MCF 10A (cell line): ENCODE measurements at regions of chr6 and their contacts with region 1.

Region 1: DNA sequence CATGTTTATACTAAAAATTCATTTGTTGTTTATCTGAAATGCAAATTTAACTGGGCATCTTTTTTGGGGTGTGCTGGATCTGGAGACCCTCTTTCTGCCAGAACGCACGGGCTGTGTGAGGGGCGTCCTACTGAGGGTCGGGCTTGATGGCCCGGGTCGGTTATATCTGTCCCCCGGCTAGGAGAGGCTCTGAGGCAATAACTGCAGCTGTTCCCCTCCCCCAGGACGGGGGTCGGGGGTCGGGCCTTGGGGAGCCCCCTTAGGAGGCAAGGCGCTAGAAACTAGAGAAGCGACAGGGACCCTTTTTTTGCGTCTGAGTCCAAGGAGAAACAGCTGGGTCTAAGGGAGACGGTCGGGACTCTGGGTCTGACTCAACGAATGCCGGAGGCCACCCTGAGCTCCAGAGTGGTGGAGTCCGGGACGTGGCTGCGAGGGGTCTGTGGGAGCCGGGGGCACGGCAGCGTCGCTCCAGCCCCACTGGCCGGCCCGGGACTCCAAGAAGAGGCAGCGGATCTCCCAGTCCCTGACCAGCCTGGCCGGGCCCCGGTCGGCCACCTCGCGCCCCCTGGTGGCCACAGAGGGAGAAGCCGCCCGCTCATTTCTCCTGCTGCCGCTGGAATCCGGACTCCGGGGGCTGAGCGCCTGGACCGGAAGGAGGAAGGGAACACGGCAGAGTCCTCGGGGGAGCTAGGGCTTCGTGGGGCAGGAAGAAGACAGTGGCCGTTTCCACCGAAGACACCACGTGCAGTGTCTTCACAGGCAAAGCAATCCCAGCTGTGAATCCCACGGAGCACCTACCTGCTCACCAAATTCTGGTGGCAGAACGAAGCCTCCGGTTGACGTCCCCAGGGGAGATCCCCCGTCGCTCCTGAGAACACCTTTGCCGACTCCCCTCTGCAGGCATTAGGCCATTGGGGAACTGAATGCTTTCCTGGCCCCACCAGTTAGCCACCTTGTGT is 24.0 kb upstream of the SCML4 start:
- DNase-seq: peak; percentile 76
- H3K4me3 Mint-ChIP-seq: peak overlapping the region; percentile 69
- H3K27ac Mint-ChIP-seq: no peak overlapping the region
- H3K4me1 Mint-ChIP-seq: no peaks in the 10 kb centered on the region
- H3K27me3 Mint-ChIP-seq: no peaks in the 10 kb centered on the region
- CTCF ChIP-seq: peak; percentile 90

Region 2: DNA sequence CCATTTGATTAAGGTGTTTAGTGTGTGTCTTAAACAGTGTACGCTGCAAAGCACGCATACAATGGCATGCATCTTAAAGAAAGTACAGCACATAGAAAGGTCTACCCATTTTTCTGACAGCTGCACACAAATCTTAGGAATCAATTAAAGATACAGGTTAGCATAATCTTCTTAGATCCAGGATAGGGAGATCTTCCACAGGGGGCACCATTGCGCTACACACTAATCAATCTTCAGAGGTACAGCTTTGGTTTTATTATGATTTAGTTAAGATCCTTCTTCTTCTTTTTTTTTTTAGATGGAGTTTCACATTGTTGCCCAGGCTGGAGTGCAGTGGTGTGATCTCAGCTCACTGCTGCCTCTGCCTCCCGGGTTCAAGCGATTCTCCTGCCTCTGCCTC is 669.1 kb before region 1 on chr6:
- CTCF ChIA-PET with region 1: interaction called, 3 read pairs
- POLR2A ChIA-PET with region 1: no interaction called
- intact Hi-C with region 1: loop called (anchors 1 kb)
- DNase-seq: peak; percentile 53
- H3K4me3 Mint-ChIP-seq: no peak overlapping the region
- H3K27ac Mint-ChIP-seq: no peak overlapping the region
- H3K4me1 Mint-ChIP-seq: peaks cover 5% of the 10 kb centered on the region
- H3K27me3 Mint-ChIP-seq: no peaks in the 10 kb centered on the region
- CTCF ChIP-seq: peak; percentile 34

Region 3: DNA sequence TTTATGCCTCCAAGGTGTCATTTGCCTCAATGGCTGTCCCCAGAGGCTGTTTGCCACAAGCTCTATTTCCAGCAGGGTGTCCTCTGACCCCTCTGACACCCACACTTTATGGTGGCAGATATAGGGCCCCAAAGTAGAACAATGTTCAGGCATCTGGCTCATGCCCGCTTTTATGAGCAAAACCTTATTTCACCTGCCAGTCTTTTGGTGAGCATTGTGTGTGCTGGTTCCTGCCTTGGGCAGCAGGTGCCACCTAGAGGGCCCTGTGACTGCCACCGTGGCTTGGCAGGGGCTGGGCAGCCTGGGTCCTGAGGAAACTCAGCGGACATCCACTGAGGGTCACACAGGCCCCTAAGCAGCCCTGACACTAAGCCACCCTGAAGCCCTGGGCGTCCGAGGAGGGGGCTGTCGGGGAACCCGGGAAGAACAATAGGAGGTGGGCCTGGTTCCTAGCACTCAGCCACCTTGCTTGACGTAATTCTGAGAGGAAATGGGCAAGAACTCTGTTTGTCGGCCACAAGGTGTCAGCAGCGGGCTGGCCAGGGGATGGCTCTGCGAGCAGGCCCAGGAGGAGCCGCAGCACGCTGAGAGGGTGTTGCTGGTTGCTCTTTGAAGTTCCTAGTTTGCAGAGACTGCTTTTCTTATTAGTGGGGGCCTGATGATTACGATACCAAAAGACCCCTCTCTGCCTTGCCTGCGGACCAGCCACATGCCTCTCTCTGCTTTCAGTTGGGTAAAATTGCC is 173.0 kb before region 1 on chr6:
- CTCF ChIA-PET with region 1: interaction called, 80 read pairs
- POLR2A ChIA-PET with region 1: interaction called, 3 read pairs
- intact Hi-C with region 1: loop called (anchors 1 kb)
- DNase-seq: peak; percentile 82
- H3K4me3 Mint-ChIP-seq: no peak overlapping the region
- H3K27ac Mint-ChIP-seq: peak overlapping the region; percentile 51
- H3K4me1 Mint-ChIP-seq: peaks cover 5% of the 10 kb centered on the region
- H3K27me3 Mint-ChIP-seq: no peaks in the 10 kb centered on the region
- CTCF ChIP-seq: peak; percentile 89

Region 4: DNA sequence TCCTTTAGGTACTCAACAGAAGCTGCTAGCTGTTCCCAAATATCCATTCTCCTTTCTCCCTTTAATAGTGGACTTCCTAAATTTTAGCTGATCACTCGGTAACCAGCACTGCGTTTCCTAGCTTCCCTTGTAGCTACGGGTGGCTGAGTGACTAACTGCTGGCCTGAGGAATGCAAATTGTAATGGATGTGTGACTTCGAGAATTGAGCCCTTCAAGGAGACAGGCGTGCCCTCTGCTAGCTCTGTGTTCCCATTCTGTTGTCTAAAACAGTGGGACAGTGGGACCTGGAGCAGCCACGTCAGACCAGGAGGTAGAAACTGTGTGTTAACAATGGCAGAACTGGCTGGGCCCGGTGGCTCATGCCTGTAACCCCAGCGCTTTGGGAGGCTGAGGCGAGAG is 80.5 kb before region 1 on chr6:
- CTCF ChIA-PET with region 1: interaction called, 14 read pairs
- POLR2A ChIA-PET with region 1: interaction called, 3 read pairs
- intact Hi-C with region 1: no loop called
- DNase-seq: no peak
- H3K4me3 Mint-ChIP-seq: no peak overlapping the region
- H3K27ac Mint-ChIP-seq: no peak overlapping the region
- H3K4me1 Mint-ChIP-seq: no peaks in the 10 kb centered on the region
- H3K27me3 Mint-ChIP-seq: no peaks in the 10 kb centered on the region
- CTCF ChIP-seq: no peak

Region 5: DNA sequence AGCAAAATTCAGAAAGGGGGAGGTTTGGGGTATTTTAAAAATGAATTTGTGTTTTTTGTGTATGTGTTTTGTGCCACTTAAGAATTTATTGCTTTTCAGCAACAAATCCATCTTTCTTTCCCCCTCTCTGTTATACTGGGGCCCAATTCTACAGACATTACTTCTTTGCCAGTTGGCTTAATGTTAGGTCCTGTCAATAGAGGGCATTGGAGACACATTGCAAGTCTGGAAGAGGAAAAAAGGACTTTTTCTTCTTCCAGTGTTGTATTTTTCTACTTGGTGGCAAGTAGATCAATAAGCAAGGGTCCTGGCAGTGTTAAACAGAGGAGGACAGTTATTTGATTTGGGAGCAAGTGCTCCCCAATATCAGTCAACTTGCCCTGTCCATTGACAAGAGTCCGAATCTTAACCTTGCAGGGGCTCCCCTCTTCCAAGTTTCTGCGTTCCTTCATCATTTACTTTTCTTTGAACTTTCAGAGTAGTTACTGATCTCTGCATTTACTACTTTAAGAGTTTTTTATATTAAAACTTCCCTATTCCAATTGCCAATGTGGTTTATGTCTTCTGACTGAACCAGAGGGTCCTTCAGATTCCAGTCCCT is 47.5 kb before region 1 on chr6:
- CTCF ChIA-PET with region 1: interaction called, 32 read pairs
- POLR2A ChIA-PET with region 1: no interaction called
- intact Hi-C with region 1: loop called (anchors 2 kb)
- DNase-seq: peak; percentile 27
- H3K4me3 Mint-ChIP-seq: no peak overlapping the region
- H3K27ac Mint-ChIP-seq: no peak overlapping the region
- H3K4me1 Mint-ChIP-seq: peaks cover 7% of the 10 kb centered on the region
- H3K27me3 Mint-ChIP-seq: peaks cover 48% of the 10 kb centered on the region
- CTCF ChIP-seq: peak; percentile 46

Region 6: DNA sequence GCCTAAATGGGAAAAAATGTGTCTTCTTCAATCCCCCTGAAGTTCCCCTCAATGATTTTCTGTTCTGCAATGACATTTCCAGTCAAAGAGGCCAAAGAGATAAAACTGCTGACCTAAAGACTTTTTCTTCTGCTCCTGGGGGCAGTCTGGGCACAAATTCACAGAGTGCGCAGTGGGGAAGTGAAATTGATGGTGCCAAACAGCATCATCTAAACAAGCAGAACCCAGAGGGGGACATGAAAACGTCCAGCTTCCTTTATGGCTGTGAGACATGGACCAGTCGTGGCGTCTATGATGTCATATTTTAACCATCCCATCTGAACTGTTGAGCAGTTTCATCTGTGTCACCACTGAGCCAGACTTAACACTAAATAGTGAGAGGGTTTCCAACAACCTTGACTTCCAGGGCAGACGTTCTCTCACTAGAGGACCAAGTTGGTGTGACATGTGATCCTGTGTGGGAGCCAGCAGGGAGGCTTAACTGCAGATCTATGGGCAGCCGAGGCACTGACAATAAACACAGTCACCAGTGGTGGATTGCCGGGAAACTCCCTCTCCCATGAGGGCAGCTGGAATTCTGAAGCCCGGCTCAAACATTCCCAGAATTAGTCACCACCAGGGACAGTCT is 36.4 kb before region 1 on chr6:
- CTCF ChIA-PET with region 1: interaction called, 26 read pairs
- POLR2A ChIA-PET with region 1: no interaction called
- intact Hi-C with region 1: no loop called
- DNase-seq: peak; percentile 22
- H3K4me3 Mint-ChIP-seq: no peak overlapping the region
- H3K27ac Mint-ChIP-seq: no peak overlapping the region
- H3K4me1 Mint-ChIP-seq: peaks cover 5% of the 10 kb centered on the region
- H3K27me3 Mint-ChIP-seq: no peaks in the 10 kb centered on the region
- CTCF ChIP-seq: no peak

Region 7: GRCh38 chr6:107832151-107833056 is 15.7 kb before region 1 on chr6:
- CTCF ChIA-PET with region 1: interaction called, 40 read pairs
- POLR2A ChIA-PET with region 1: interaction called, 3 read pairs
- intact Hi-C with region 1: no loop called
- DNase-seq: no peak
- H3K4me3 Mint-ChIP-seq: no peak overlapping the region
- H3K27ac Mint-ChIP-seq: no peak overlapping the region
- H3K4me1 Mint-ChIP-seq: no peaks in the 10 kb centered on the region
- H3K27me3 Mint-ChIP-seq: no peaks in the 10 kb centered on the region
- CTCF ChIP-seq: no peak